ENCODE measurements at regions of chr17 and their contacts with region 1.

Region 1: GRCh38 chr17:8300627-8301242 is 5.5 kb upstream of the SLC25A35 start:
- DNase-seq: peak; percentile 70
- H3K4me3 Mint-ChIP-seq: no peak overlapping the region
- H3K27ac Mint-ChIP-seq: no peak overlapping the region
- H3K4me1 Mint-ChIP-seq: peaks cover 16% of the 10 kb centered on the region
- H3K27me3 Mint-ChIP-seq: peaks cover 12% of the 10 kb centered on the region

Region 2: GRCh38 chr17:8243827-8244226 is 56.9 kb before region 1 on chr17:
- CTCF ChIA-PET with region 1: interaction called, 13 read pairs
- DNase-seq: peak; percentile 67
- H3K4me3 Mint-ChIP-seq: peak overlapping the region; percentile 60
- H3K27ac Mint-ChIP-seq: peak overlapping the region; percentile 89
- H3K4me1 Mint-ChIP-seq: peaks cover 49% of the 10 kb centered on the region
- H3K27me3 Mint-ChIP-seq: no peaks in the 10 kb centered on the region

Region 3: GRCh38 chr17:8275421-8276290 is 25.1 kb before region 1 on chr17:
- CTCF ChIA-PET with region 1: no interaction called
- DNase-seq: no peak
- H3K4me3 Mint-ChIP-seq: no peak overlapping the region
- H3K27ac Mint-ChIP-seq: no peak overlapping the region
- H3K4me1 Mint-ChIP-seq: no peaks in the 10 kb centered on the region
- H3K27me3 Mint-ChIP-seq: no peaks in the 10 kb centered on the region

Measured in activated naive CD4-positive, alpha-beta T cell treated with anti-CD3 and anti-CD28 coated beads, Interleukin-2, amount 10 ng/mL, durations not matched to agents 7 days and 5 days (primary cell).